CD4-positive, alpha-beta T cell (primary cell): ENCODE measurements at regions of chr6 and their contacts with region 1.

Region 1: GRCh38 chr6:53309059-53309900 is 39.5 kb downstream of the ELOVL5 start:
- DNase-seq: peak in 6 of 14 experiments; percentile 15 to 51 (median 42)
- ATAC-seq: peak; percentile 47
- H3K4me3 ChIP-seq: no peak overlapping the region
- H3K4me3 Mint-ChIP-seq: peak overlapping the region; percentile 44
- H3K27ac ChIP-seq: peak overlapping the region in 1 of 2 donors; percentile 41
- H3K27ac Mint-ChIP-seq: peak overlapping the region; percentile 69
- H3K4me1 ChIP-seq: peaks cover 60% of the 10 kb centered on the region
- H3K4me1 Mint-ChIP-seq: peaks cover 84% of the 10 kb centered on the region
- H3K27me3 ChIP-seq: no peaks in the 10 kb centered on the region
- H3K27me3 Mint-ChIP-seq: no peaks in the 10 kb centered on the region
- CTCF ChIP-seq: no peak

Region 2: GRCh38 chr6:53294095-53294494 is 15.2 kb before region 1 on chr6:
- CTCF ChIA-PET with region 1: interaction called, 4 read pairs
- POLR2A ChIA-PET with region 1: interaction called, 4 read pairs
- intact Hi-C with region 1: loop called in 1 of 2 experiments (anchors 2 kb)
- DNase-seq: peak in 3 of 14 experiments; percentile 22 to 46 (median 40)
- ATAC-seq: no peak
- H3K4me3 ChIP-seq: no peak overlapping the region
- H3K4me3 Mint-ChIP-seq: no peak overlapping the region
- H3K27ac ChIP-seq: peak overlapping the region in 1 of 2 donors; percentile 23
- H3K27ac Mint-ChIP-seq: peak overlapping the region; percentile 73
- H3K4me1 ChIP-seq: peaks cover 53% of the 10 kb centered on the region
- H3K4me1 Mint-ChIP-seq: peaks cover 89% of the 10 kb centered on the region
- H3K27me3 ChIP-seq: no peaks in the 10 kb centered on the region
- H3K27me3 Mint-ChIP-seq: no peaks in the 10 kb centered on the region
- CTCF ChIP-seq: peak; percentile 33

Region 3: GRCh38 chr6:53330137-53330536 is 20.9 kb after region 1 on chr6:
- CTCF ChIA-PET with region 1: interaction called, 3 read pairs
- POLR2A ChIA-PET with region 1: interaction called, 34 read pairs
- intact Hi-C with region 1: no loop called
- DNase-seq: no peak
- ATAC-seq: no peak
- H3K4me3 ChIP-seq: no peak overlapping the region
- H3K4me3 Mint-ChIP-seq: no peak overlapping the region
- H3K27ac ChIP-seq: no peak overlapping the region
- H3K27ac Mint-ChIP-seq: no peak overlapping the region
- H3K4me1 ChIP-seq: peaks cover 67% of the 10 kb centered on the region
- H3K4me1 Mint-ChIP-seq: peaks cover 84% of the 10 kb centered on the region
- H3K27me3 ChIP-seq: no peaks in the 10 kb centered on the region
- H3K27me3 Mint-ChIP-seq: no peaks in the 10 kb centered on the region
- CTCF ChIP-seq: no peak

Region 4: DNA sequence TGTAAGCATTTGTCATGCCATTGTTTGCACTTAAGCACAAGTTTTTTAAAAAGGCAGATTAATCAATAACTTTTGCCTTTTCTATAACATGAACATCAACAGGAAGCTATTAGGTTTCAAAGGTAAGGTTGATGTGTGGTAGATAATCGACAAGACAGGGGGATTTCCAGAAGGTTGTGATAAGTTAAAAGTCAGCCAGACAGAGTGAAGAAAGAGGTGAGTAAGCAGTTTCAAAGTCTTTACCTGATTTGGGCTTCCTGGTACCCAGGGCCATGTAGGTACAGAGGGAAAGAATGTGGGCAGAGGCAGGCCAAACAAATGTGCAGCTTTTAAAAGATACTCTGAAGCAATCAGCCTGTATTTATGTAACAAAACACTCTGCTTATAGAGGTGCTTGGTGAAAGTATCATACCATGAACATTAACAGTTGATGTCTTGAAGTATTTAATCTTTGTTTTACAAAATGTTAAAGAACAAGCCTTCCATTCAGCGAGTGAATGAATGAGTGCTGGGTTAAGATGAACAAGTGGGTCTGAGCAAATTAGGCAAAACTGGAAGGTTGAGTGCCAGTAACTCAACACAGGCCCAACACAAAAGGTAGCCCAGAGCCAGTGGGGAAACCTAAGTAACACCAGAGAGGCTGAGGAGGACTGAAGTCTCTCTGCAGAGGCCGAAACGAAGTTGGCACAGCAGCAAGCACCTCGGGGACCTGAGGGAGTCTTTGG is 545.7 kb after region 1 on chr6:
- CTCF ChIA-PET with region 1: no interaction called
- POLR2A ChIA-PET with region 1: no interaction called
- intact Hi-C with region 1: no loop called
- DNase-seq: peak in 4 of 14 experiments; percentile 4 to 39 (median 29)
- ATAC-seq: no peak
- H3K4me3 ChIP-seq: no peak overlapping the region
- H3K4me3 Mint-ChIP-seq: no peak overlapping the region
- H3K27ac ChIP-seq: no peak overlapping the region
- H3K27ac Mint-ChIP-seq: no peak overlapping the region
- H3K4me1 ChIP-seq: peaks cover 3% of the 10 kb centered on the region
- H3K4me1 Mint-ChIP-seq: peaks cover 24% of the 10 kb centered on the region
- H3K27me3 ChIP-seq: no peaks in the 10 kb centered on the region
- H3K27me3 Mint-ChIP-seq: no peaks in the 10 kb centered on the region
- CTCF ChIP-seq: no peak